ENCODE measurements at regions of chr15 and their contacts with region 1.

Region 1: DNA sequence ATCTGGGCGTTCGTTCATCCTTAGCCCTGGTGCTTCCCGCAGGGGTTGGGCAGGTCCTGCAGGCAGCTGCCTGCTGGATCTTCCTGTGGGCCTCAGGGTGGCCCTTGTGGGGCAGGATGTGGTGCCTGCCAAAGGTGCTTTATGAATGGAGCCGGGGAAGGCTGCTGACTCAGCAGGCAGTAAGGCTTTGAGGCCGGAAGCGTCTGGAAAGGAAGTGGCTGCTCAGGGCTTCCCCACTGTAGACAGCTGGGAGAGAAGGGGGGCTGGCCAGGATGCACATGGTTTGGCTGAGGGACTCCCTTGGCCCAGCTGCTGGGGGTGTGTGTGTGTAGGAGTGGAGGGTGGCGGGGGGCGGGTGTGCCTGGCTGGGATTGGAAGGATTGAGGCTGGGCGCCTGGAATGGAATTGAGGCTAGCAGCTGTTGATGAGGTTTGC is 12.9 kb downstream of the CD276 start:
- DNase-seq: peak; percentile 40 to 83 (median 73)
- ATAC-seq: peak; percentile 86 to 95 (median 90)
- H3K4me3 ChIP-seq: peak overlapping the region in 1 of 2 donors; percentile 30
- H3K4me3 Mint-ChIP-seq: peak overlapping the region in 1 of 3 donors; percentile 58
- H3K27ac ChIP-seq: no peak overlapping the region
- H3K27ac Mint-ChIP-seq: peak overlapping the region in 1 of 2 donors; percentile 64
- H3K4me1 ChIP-seq: peaks cover 5 to 25% of the 10 kb centered on the region in 2 experiments
- H3K4me1 Mint-ChIP-seq: peaks cover 17 to 33% (median 22%) of the 10 kb centered on the region in 3 donors
- H3K27me3 ChIP-seq: peaks cover 2 to 61% of the 10 kb centered on the region in 2 experiments
- H3K27me3 Mint-ChIP-seq: peaks cover 52 to 64% of the 10 kb centered on the region in 2 donors

Region 2: DNA sequence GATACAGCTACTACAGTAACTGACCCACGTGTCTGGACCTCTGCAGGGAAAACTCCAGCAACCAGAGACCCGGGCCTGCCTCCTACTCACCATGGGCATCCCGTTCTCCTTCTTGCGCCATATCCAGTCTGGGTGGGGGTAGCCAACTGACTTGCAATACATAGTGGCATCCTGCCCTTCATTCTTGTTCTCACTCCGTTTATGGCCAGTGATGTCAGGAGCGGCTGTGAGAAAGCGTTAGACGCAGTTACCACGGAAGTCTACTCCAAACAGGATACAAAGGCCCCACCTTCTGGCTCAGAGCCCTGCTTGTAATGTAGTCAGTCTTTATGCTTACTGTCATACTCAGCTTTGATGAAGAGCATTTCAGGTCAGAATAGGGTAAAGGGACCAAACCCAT is 123.5 kb before region 1 on chr15:
- CTCF ChIA-PET with region 1: no interaction called
- POLR2A ChIA-PET with region 1: no interaction called
- DNase-seq: no peak
- ATAC-seq: no peak
- H3K4me3 ChIP-seq: no peak overlapping the region
- H3K4me3 Mint-ChIP-seq: no peak overlapping the region
- H3K27ac ChIP-seq: no peak overlapping the region
- H3K27ac Mint-ChIP-seq: no peak overlapping the region
- H3K4me1 ChIP-seq: no peaks in the 10 kb centered on the region
- H3K4me1 Mint-ChIP-seq: no peaks in the 10 kb centered on the region
- H3K27me3 ChIP-seq: no peaks in the 10 kb centered on the region
- H3K27me3 Mint-ChIP-seq: no peaks in the 10 kb centered on the region

Region 3: DNA sequence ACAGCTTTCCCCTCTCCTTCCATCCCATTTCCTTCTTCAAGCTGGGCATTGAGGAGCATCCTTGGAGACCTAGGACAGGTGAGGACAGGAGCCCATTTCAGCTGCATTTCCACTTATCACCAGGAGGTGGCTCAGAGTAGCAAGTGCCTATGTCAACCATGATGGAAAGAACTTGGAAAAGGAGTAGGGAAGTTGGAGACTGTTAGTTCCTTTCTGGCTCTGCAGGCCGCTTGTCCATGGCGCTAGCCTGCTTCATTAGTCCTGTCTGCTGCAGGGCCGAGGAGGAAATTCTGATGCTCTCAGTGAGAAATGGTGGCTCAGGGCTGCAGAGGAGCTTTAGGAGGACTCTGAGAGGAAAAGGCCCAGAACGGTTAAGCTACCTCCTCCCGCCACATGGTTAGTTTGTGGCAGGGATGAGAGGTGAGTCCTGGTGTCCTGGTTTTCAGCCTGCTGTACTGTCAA is 19.9 kb before region 1 on chr15:
- CTCF ChIA-PET with region 1: interaction called, 33 to 37 read pairs
- POLR2A ChIA-PET with region 1: no interaction called
- DNase-seq: peak in 29 of 35 experiments; percentile 8 to 76 (median 37)
- ATAC-seq: peak in 2 of 4 experiments; percentile 41 to 55
- H3K4me3 ChIP-seq: no peak overlapping the region
- H3K4me3 Mint-ChIP-seq: no peak overlapping the region
- H3K27ac ChIP-seq: no peak overlapping the region
- H3K27ac Mint-ChIP-seq: no peak overlapping the region
- H3K4me1 ChIP-seq: no peaks in the 10 kb centered on the region
- H3K4me1 Mint-ChIP-seq: no peaks in the 10 kb centered on the region
- H3K27me3 ChIP-seq: peaks cover 0 to 25% of the 10 kb centered on the region in 2 experiments
- H3K27me3 Mint-ChIP-seq: peaks cover 33 to 34% of the 10 kb centered on the region in 2 donors

Measured in T-cell (primary cell).